ENCODE measurements at regions of chr14 and their contacts with region 1.

Region 1: DNA sequence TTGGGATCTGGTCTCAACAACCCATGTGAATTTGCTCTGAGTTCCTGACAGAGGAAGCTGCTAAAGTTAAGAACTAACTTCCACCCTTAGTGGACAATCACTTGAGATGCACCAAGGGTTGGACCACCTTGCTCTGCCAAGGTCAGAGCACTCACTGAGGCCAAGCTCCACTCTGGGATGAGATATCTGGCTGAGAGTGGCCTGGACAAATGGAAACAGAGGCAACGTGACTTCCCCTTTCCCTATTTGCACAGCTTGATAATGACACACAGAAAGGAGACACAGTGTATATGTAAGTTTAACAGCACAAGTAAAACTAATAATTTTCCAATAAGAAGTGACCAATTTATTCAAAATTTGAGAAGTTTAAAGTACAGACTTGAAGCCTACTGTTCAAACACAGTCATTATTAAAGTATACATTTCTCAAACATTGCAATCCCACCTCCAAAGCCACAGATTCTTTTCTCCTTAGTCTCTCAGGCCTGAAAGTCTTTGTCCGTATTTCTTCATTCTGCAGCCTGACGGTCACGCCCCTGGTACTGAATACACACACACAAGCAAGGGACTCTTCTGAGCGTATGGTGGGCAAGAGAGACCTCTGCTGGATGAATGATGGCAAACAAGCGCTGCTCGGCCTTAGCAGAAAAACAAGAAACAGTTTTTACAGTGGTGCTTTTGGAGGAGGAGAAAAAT is 28.6 kb downstream of the TMEM30B start:
- DNase-seq: peak; percentile 13 to 76 (median 52)
- ATAC-seq: peak; percentile 85
- H3K4me3 ChIP-seq: no peak overlapping the region
- H3K4me3 Mint-ChIP-seq: no peak overlapping the region
- H3K27ac ChIP-seq: no peak overlapping the region
- H3K27ac Mint-ChIP-seq: no peak overlapping the region
- H3K4me1 ChIP-seq: no peaks in the 10 kb centered on the region
- H3K4me1 Mint-ChIP-seq: peaks cover 3% of the 10 kb centered on the region
- H3K27me3 ChIP-seq: no peaks in the 10 kb centered on the region
- H3K27me3 Mint-ChIP-seq: peaks cover 7% of the 10 kb centered on the region
- CTCF ChIP-seq: peak; percentile 84

Region 2: GRCh38 chr14:59964251-59965007 is 1288.1 kb before region 1 on chr14:
- CTCF ChIA-PET with region 1: no interaction called
- POLR2A ChIA-PET with region 1: no interaction called
- intact Hi-C with region 1: loop called in 1 of 2 experiments (anchors 10 kb)
- DNase-seq: peak in 2 of 9 experiments; percentile 24 to 47
- ATAC-seq: peak; percentile 34
- H3K4me3 ChIP-seq: peak overlapping the region in 1 of 2 experiments; percentile 52
- H3K4me3 Mint-ChIP-seq: peak overlapping the region; percentile 88
- H3K27ac ChIP-seq: no peak overlapping the region
- H3K27ac Mint-ChIP-seq: peak overlapping the region; percentile 95
- H3K4me1 ChIP-seq: peaks cover 12% of the 10 kb centered on the region
- H3K4me1 Mint-ChIP-seq: peaks cover 18% of the 10 kb centered on the region
- H3K27me3 ChIP-seq: no peaks in the 10 kb centered on the region
- H3K27me3 Mint-ChIP-seq: no peaks in the 10 kb centered on the region
- CTCF ChIP-seq: no peak

Region 3: DNA sequence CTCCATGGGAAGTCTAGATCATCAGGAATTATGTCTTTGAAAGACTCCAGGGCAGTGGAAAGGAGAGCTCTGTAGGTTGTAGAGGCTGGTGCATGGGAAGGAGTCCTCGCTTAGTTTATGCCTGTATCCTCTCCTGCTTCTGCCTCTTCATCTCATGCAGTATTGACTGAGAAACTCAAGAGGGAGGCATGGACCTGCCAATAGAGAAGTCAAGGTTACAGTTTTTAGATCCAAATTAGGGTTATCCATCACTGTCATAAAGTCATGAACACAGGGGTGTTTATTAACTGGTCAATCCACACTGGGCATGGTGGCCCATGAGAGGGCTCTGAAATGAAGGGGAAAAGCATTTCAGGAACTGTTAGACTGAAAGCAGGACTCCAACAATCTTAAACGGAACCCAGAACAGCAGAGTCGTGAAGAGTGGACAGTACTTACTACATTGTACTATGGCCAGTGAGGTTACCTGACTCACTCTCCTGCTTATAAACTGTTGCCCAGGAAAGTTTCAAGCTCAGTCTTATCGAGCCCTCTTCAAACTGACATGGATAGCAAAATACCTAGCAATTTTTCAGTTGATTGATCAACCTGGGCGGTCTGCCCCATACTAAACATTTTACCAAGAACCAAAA is 1057.2 kb before region 1 on chr14:
- CTCF ChIA-PET with region 1: no interaction called
- POLR2A ChIA-PET with region 1: no interaction called
- intact Hi-C with region 1: loop called in 1 of 2 experiments (anchors 5 kb)
- DNase-seq: peak in 2 of 9 experiments; percentile 13 to 33
- ATAC-seq: peak; percentile 52
- H3K4me3 ChIP-seq: no peak overlapping the region
- H3K4me3 Mint-ChIP-seq: no peak overlapping the region
- H3K27ac ChIP-seq: no peak overlapping the region
- H3K27ac Mint-ChIP-seq: no peak overlapping the region
- H3K4me1 ChIP-seq: no peaks in the 10 kb centered on the region
- H3K4me1 Mint-ChIP-seq: no peaks in the 10 kb centered on the region
- H3K27me3 ChIP-seq: peaks cover 0 to 3% of the 10 kb centered on the region in 2 experiments
- H3K27me3 Mint-ChIP-seq: peaks cover 5% of the 10 kb centered on the region
- CTCF ChIP-seq: no peak

Region 4: GRCh38 chr14:60622917-60623257 is 629.6 kb before region 1 on chr14:
- CTCF ChIA-PET with region 1: interaction called, 76 read pairs
- POLR2A ChIA-PET with region 1: no interaction called
- intact Hi-C with region 1: loop called in 1 of 2 experiments (anchors 1 kb)
- DNase-seq: no peak
- ATAC-seq: no peak
- H3K4me3 ChIP-seq: no peak overlapping the region
- H3K4me3 Mint-ChIP-seq: no peak overlapping the region
- H3K27ac ChIP-seq: no peak overlapping the region
- H3K27ac Mint-ChIP-seq: no peak overlapping the region
- H3K4me1 ChIP-seq: no peaks in the 10 kb centered on the region
- H3K4me1 Mint-ChIP-seq: no peaks in the 10 kb centered on the region
- H3K27me3 ChIP-seq: no peaks in the 10 kb centered on the region
- H3K27me3 Mint-ChIP-seq: peaks cover 21% of the 10 kb centered on the region
- CTCF ChIP-seq: no peak

Region 5: GRCh38 chr14:61025251-61026223 is 227.0 kb before region 1 on chr14:
- CTCF ChIA-PET with region 1: interaction called, 5 read pairs
- POLR2A ChIA-PET with region 1: no interaction called
- intact Hi-C with region 1: loop called (anchors 1 to 2 kb)
- DNase-seq: peak in 8 of 9 experiments; percentile 9 to 74 (median 50)
- ATAC-seq: no peak
- H3K4me3 ChIP-seq: no peak overlapping the region
- H3K4me3 Mint-ChIP-seq: no peak overlapping the region
- H3K27ac ChIP-seq: no peak overlapping the region
- H3K27ac Mint-ChIP-seq: no peak overlapping the region
- H3K4me1 ChIP-seq: no peaks in the 10 kb centered on the region
- H3K4me1 Mint-ChIP-seq: peaks cover 2% of the 10 kb centered on the region
- H3K27me3 ChIP-seq: no peaks in the 10 kb centered on the region
- H3K27me3 Mint-ChIP-seq: no peaks in the 10 kb centered on the region
- CTCF ChIP-seq: peak; percentile 84